Activated B cell treated with CpG ODN at 0.5 μM for 24 hours (primary cell): ENCODE measurements at regions of chr20 and their contacts with region 1.

Region 1: GRCh38 chr20:32285621-32286371 is 8.3 kb downstream of the KIF3B start:
- DNase-seq: no peak
- ATAC-seq: peak; percentile 79
- H3K4me3 Mint-ChIP-seq: peak overlapping the region; percentile 70
- H3K27ac Mint-ChIP-seq: peak overlapping the region; percentile 89
- H3K4me1 Mint-ChIP-seq: peaks cover 86% of the 10 kb centered on the region
- H3K27me3 Mint-ChIP-seq: no peaks in the 10 kb centered on the region
- CTCF ChIP-seq: no peak

Region 2: GRCh38 chr20:32231847-32232246 is 53.9 kb before region 1 on chr20:
- CTCF ChIA-PET with region 1: no interaction called
- POLR2A ChIA-PET with region 1: interaction called, 5 read pairs
- intact Hi-C with region 1: loop called (anchors 10 kb)
- DNase-seq: no peak
- ATAC-seq: peak; percentile 73
- H3K4me3 Mint-ChIP-seq: no peak overlapping the region
- H3K27ac Mint-ChIP-seq: peak overlapping the region; percentile 90
- H3K4me1 Mint-ChIP-seq: peaks cover 26% of the 10 kb centered on the region
- H3K27me3 Mint-ChIP-seq: no peaks in the 10 kb centered on the region
- CTCF ChIP-seq: no peak

Region 3: DNA sequence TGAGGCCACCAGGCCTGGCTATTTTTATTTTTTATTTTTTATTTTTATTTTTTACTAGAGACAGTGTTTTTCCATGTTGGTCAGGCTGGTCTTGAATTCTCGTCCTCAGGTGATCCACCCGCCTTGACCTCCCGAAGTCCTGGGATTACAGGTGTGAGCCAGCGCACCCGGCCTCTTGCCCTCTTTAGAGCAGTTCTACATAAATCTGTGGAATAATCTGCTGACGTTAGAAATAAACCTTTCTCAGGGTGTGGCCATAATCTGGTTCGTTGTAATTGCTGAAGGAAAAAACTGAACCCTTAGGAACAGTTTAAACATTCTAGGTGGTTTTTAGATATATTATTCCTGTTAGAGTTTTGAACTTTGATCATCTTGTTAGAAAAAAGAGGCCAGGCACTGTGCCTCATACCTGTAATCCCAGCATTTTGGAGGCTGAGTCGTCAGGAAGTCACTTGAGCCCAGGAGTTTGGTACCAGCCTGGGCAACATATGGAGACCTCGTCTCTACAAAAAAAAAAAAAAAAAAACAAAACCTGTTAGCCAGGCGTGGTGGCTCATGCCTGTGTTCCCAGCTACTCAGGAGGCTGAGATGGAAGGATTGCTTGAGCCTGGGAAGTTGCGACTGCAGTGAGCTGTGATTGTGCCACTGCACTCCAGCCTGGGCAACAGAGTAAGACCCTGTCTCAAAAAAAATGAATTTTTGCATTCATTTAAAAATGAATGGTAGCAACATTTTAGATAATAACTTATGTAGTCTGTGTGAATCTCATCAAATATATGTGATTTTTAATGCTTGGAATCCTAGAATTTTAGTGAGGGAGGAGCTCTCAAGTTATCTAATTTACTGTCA is 96.5 kb after region 1 on chr20:
- CTCF ChIA-PET with region 1: no interaction called
- POLR2A ChIA-PET with region 1: interaction called, 13 read pairs
- intact Hi-C with region 1: no loop called
- DNase-seq: no peak
- ATAC-seq: no peak
- H3K4me3 Mint-ChIP-seq: no peak overlapping the region
- H3K27ac Mint-ChIP-seq: no peak overlapping the region
- H3K4me1 Mint-ChIP-seq: peaks cover 29% of the 10 kb centered on the region
- H3K27me3 Mint-ChIP-seq: no peaks in the 10 kb centered on the region
- CTCF ChIP-seq: no peak